Upper lobe of right lung (tissue), 1 donor: ENCODE measurements at regions of chr10 and their contacts with region 1.

Region 1: GRCh38 chr10:13787015-13787421 is 200.3 kb downstream of the PRPF18 start:
- DNase-seq: no peak
- ATAC-seq: peak; percentile 39
- H3K4me3 ChIP-seq: no peak overlapping the region
- H3K27ac ChIP-seq: peak overlapping the region; percentile 24
- H3K4me1 ChIP-seq: peaks cover 22% of the 10 kb centered on the region
- H3K27me3 ChIP-seq: no peaks in the 10 kb centered on the region
- CTCF ChIP-seq: no peak

Region 2: GRCh38 chr10:13839430-13839990 is 52.5 kb after region 1 on chr10:
- intact Hi-C with region 1: no loop called
- DNase-seq: no peak
- ATAC-seq: peak; percentile 20
- H3K4me3 ChIP-seq: no peak overlapping the region
- H3K27ac ChIP-seq: no peak overlapping the region
- H3K4me1 ChIP-seq: peaks cover 18% of the 10 kb centered on the region
- H3K27me3 ChIP-seq: no peaks in the 10 kb centered on the region
- CTCF ChIP-seq: no peak

Region 3: GRCh38 chr10:13949844-13950595 is 163.0 kb after region 1 on chr10:
- intact Hi-C with region 1: loop called (anchors 10 kb)
- DNase-seq: no peak
- ATAC-seq: no peak
- H3K4me3 ChIP-seq: no peak overlapping the region
- H3K27ac ChIP-seq: no peak overlapping the region
- H3K4me1 ChIP-seq: peaks cover 16% of the 10 kb centered on the region
- H3K27me3 ChIP-seq: no peaks in the 10 kb centered on the region
- CTCF ChIP-seq: no peak

Region 4: DNA sequence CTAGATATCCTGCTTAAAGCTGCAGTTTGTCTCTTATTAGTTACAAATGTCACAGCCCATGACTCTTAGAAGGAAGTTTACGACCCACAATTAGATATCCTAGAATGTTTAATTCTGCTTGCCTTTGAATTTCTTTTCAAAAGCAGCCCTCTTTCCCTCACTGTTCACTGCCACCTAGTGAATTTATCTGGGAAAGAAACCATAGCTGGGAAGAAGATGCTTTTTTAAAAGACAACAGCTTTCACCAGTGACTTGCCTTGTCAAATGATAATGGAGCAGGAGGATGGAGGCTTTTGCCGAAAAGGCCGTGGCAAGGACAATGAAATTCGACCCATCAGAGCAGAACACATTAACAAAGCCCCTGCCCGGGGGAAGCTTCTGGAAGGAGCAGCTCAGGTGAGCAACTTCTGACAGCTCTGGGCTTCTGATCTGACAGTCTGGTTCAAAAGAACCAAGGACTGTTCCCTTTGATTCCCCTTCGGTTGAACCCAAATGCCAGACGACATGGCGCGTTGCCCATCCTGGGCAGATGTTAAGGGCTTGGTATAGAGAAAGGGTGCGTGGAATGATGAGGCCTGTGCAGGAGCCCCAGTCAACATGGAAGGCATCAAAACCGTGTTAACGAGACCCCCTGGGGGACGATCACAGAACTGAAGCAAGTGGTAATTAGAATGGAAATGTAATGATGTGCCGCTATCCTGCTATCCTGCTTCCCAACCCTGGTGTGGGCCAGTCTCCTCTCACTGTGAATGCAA is 306.9 kb after region 1 on chr10:
- intact Hi-C with region 1: loop called (anchors 10 kb)
- DNase-seq: no peak
- ATAC-seq: no peak
- H3K4me3 ChIP-seq: no peak overlapping the region
- H3K27ac ChIP-seq: no peak overlapping the region
- H3K4me1 ChIP-seq: no peaks in the 10 kb centered on the region
- H3K27me3 ChIP-seq: no peaks in the 10 kb centered on the region
- CTCF ChIP-seq: peak; percentile 48